A549 (cell line): ENCODE measurements at regions of chr17 and their contacts with region 1.

Region 1: DNA sequence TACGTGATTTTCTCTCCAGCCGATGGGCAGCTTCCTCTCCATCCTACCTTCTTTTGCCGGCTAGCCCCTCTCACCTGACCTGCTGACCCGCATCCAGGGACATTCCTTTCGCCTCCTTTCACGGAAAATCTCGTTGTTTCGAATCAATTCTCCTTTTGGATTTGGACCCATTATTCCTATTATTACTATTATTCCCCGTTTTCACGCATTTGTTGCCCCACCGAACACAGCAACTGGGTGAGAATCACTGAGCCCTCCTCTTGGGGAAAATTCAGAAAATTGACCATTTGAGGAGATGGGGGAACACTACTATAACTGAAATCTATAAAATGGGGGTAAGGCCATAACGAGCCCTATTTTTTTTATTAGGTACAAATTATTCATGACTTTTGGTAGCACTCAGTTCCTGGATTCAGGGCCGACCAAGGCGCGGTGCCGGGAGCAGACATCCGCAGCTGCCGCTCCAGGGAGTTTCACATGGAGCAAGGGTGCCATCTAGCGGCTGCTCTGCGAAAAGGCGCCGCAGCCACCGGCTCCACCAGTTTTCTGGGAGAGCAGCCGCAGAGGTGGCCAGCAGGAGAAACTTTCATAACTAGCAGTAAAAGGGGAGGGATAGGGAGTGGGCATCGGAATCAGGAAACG is 3.3 kb upstream of the HOXB8 start:
- DNase-seq: peak; percentile 86 to 97
- ATAC-seq: peak; percentile 74 to 78
- H3K4me3 ChIP-seq: no peak overlapping the region
- H3K27ac ChIP-seq: no peak overlapping the region
- H3K4me1 ChIP-seq: peaks cover 12% of the 10 kb centered on the region
- CTCF ChIP-seq: peak; percentile 99
- EP300 ChIP-seq: no peak
- POLR2A ChIP-seq: no peak
- RAD21 ChIP-seq: peak; percentile 97 to 99

Region 2: GRCh38 chr17:48153691-48154358 is 464.6 kb before region 1 on chr17:
- CTCF ChIA-PET with region 1: interaction called, 12 read pairs
- POLR2A ChIA-PET with region 1: no interaction called
- DNase-seq: peak; percentile 74 to 75
- ATAC-seq: peak; percentile 72 to 87
- H3K4me3 ChIP-seq: no peak overlapping the region
- H3K27ac ChIP-seq: no peak overlapping the region
- H3K4me1 ChIP-seq: peaks cover 5% of the 10 kb centered on the region
- CTCF ChIP-seq: peak; percentile 84
- EP300 ChIP-seq: no peak
- POLR2A ChIP-seq: no peak
- RAD21 ChIP-seq: peak; percentile 78 to 84

Region 3: DNA sequence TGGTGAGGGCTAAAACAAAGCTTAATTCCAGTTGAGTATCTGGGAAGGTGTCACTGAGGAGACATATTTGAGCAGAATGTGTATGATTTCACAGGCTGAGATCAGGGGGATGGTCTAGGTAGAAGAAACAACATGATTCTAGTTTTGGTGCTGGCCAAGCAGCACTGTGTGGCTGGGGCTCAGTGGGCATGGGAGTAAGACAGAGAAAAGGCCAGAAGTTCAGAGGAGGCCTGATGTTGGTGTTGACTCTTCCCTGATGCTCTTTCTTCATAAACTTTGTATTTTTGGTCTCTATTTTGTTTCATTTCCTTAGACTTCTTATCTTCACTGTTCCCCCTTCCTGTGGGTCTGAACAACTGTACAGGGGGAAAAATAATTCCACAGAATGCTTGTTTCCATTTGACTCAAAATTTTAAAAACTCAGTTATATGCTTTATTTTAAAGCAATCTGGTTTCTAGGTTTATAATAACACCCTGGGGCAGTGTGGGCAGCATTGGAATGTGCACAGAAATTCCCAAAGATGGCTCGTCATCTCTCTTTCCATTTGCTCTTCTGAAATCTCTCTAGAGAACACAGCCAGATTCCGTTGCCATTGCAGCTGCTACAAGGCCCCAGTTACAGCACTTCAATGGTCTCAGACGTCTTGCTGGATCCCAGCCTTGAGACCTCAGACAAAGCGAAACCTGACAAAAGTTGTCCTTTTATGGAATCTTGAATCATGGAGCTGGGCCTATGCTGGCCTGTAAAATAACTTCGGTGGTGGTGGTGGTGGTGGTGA is 442.5 kb before region 1 on chr17:
- CTCF ChIA-PET with region 1: interaction called, 12 read pairs
- POLR2A ChIA-PET with region 1: no interaction called
- DNase-seq: no peak
- ATAC-seq: no peak
- H3K4me3 ChIP-seq: no peak overlapping the region
- H3K27ac ChIP-seq: no peak overlapping the region
- H3K4me1 ChIP-seq: peaks cover 5% of the 10 kb centered on the region; the same call in 1 of the 3 replicates
- CTCF ChIP-seq: no peak
- EP300 ChIP-seq: no peak
- POLR2A ChIP-seq: no peak
- RAD21 ChIP-seq: no peak

Region 4: GRCh38 chr17:48250949-48251348 is 367.4 kb before region 1 on chr17:
- CTCF ChIA-PET with region 1: interaction called, 11 read pairs
- POLR2A ChIA-PET with region 1: no interaction called
- DNase-seq: no peak
- ATAC-seq: no peak
- H3K4me3 ChIP-seq: no peak overlapping the region
- H3K27ac ChIP-seq: no peak overlapping the region
- H3K4me1 ChIP-seq: peaks cover 22% of the 10 kb centered on the region
- CTCF ChIP-seq: no peak
- EP300 ChIP-seq: no peak
- POLR2A ChIP-seq: no peak
- RAD21 ChIP-seq: no peak

Region 5: GRCh38 chr17:48335858-48336500 is 282.4 kb before region 1 on chr17:
- CTCF ChIA-PET with region 1: interaction called, 84 read pairs
- POLR2A ChIA-PET with region 1: no interaction called
- DNase-seq: peak; percentile 35 to 68
- ATAC-seq: peak; percentile 71 to 74; a peak in 5 of 6 replicates
- H3K4me3 ChIP-seq: no peak overlapping the region
- H3K27ac ChIP-seq: no peak overlapping the region
- H3K4me1 ChIP-seq: peaks cover 17% of the 10 kb centered on the region
- CTCF ChIP-seq: peak; percentile 94
- EP300 ChIP-seq: no peak
- POLR2A ChIP-seq: no peak
- RAD21 ChIP-seq: peak; percentile 75 to 79

Region 6: DNA sequence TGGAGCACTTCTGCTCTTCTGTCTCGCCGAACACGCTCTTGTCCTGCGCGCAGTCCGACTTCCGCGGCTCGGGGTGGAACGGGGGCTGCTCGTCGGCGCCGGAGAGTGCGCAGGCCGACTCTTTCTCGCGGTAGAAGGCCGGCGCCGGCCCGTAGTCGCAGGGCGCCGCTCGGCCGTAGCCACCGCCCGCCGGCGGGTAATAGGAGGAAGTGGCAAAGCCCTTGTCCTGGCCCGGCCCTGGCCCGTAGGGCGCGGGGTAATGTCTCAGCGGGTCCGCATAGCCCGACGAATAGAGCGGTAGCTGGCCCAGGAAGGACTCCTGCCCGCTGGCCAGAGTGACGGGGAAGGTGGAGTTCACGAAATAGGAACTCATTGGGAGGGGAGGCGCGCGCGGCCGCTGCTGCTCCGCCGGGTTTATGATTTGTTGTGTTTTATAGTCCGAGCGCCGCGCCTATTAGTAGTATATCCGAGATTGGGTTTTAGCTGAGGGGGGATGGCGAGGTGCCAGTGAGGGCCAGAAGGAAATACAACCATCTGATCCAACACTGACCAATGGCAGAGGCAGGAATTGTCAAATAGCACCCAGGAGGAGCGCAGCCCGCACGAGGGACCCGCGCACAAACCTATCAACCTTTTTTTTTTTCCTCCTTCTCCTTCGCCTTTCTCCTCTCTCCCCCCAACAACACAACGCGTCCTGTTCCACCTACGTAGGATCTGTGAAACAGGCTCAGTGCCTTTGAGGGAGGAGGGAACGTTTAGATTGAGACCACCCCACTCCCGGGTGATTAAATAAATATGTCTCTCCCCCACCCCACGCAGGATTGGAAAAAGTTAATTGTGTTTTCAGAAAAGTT is 20.4 kb before region 1 on chr17:
- CTCF ChIA-PET with region 1: no interaction called
- POLR2A ChIA-PET with region 1: no interaction called
- DNase-seq: no peak
- ATAC-seq: no peak
- H3K4me3 ChIP-seq: no peak overlapping the region
- H3K27ac ChIP-seq: no peak overlapping the region
- H3K4me1 ChIP-seq: peaks cover 30% of the 10 kb centered on the region
- CTCF ChIP-seq: no peak
- EP300 ChIP-seq: no peak
- POLR2A ChIP-seq: no peak
- RAD21 ChIP-seq: no peak

Region 7: GRCh38 chr17:48630925-48631692 is 12.7 kb after region 1 on chr17:
- CTCF ChIA-PET with region 1: interaction called, 42 read pairs
- POLR2A ChIA-PET with region 1: interaction called, 30 read pairs
- DNase-seq: no peak
- ATAC-seq: no peak
- H3K4me3 ChIP-seq: no peak overlapping the region
- H3K27ac ChIP-seq: no peak overlapping the region
- H3K4me1 ChIP-seq: peaks cover 19% of the 10 kb centered on the region
- CTCF ChIP-seq: no peak
- EP300 ChIP-seq: no peak
- POLR2A ChIP-seq: no peak
- RAD21 ChIP-seq: no peak